ENCODE measurements at regions of chr2 and their contacts with region 1.

Region 1: GRCh38 chr2:233243348-233243747 is 8.1 kb upstream of the ATG16L1 start:
- DNase-seq: no peak
- ATAC-seq: no peak
- H3K4me3 Mint-ChIP-seq: no peak overlapping the region
- H3K27ac Mint-ChIP-seq: no peak overlapping the region
- H3K4me1 Mint-ChIP-seq: no peaks in the 10 kb centered on the region
- H3K27me3 Mint-ChIP-seq: no peaks in the 10 kb centered on the region
- CTCF ChIP-seq: no peak

Region 2: DNA sequence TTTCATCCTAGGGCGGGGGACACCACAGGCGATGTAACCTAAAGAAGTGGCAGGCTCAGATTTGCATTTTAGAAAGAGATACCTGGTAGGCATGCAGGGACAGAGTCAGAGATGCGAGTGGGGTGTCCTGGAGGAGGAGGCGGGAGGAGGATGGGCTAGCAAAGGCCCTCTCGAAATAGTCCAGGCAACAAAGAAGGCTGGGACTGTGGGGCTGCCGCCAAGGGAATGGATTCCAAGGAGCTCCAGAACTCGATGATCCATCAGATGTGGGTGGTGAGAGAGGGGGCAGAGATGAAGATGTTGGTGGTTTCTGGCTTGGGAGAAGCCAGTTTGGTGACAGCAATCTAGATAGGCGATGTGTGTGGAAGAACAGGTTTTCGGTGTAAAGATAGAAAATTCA is 195.7 kb before region 1 on chr2:
- CTCF ChIA-PET with region 1: no interaction called
- POLR2A ChIA-PET with region 1: interaction called, 11 read pairs
- DNase-seq: no peak
- ATAC-seq: no peak
- H3K4me3 Mint-ChIP-seq: no peak overlapping the region
- H3K27ac Mint-ChIP-seq: no peak overlapping the region
- H3K4me1 Mint-ChIP-seq: peaks cover 50% of the 10 kb centered on the region
- H3K27me3 Mint-ChIP-seq: no peaks in the 10 kb centered on the region; the same call in 1 of the 2 replicates
- CTCF ChIP-seq: no peak

Region 3: DNA sequence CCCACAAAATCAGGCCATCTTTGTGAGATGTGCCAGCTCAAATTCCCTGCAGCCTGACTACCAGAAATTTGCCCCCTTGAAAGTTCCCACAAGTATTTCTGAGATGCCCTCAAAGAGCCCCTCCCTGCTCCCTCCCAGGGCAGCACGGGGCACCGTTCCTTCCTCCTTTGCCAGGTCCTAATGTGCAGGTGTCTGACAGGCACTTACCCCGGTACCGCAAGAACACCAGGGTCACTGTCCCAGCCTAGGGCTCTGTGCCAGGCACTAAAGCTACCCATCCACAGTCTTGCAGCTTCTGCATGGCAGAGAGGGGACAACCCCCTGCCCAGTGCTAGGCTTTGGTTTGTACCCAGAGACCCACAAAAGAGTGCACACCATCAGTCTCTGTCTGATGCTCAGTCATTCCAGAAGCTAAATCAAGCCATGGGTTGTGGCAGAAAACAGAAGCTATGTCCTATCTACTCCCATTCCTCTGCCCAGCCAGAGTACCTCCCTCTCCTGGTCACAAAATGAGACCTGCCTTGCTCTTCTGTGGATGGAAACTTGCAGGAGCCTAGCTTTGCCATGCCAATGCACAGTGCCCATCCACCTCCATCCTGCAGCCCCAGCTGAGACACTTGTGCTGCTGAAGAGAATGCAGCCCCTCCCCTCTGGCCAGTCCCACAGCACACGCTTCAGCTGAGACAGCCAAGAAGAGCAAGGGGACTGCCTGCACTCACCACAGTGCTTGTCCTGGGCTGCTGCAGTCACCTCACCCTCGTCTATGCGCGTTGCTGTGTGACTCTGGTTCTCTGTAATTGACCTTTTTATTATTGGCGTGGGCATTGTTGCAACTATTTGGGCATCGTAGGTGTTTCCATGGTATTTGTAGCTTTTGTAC is 134.5 kb before region 1 on chr2:
- CTCF ChIA-PET with region 1: no interaction called
- POLR2A ChIA-PET with region 1: no interaction called
- DNase-seq: no peak
- ATAC-seq: 0 out of 2 replicates have a peak, but pooled peaks have one; percentile 39
- H3K4me3 Mint-ChIP-seq: no peak overlapping the region
- H3K27ac Mint-ChIP-seq: no peak overlapping the region
- H3K4me1 Mint-ChIP-seq: 0 out of 2 replicates have a peak, but pooled peaks cover 3% of the 10 kb centered on the region
- H3K27me3 Mint-ChIP-seq: no peaks in the 10 kb centered on the region
- CTCF ChIP-seq: no peak

Region 4: DNA sequence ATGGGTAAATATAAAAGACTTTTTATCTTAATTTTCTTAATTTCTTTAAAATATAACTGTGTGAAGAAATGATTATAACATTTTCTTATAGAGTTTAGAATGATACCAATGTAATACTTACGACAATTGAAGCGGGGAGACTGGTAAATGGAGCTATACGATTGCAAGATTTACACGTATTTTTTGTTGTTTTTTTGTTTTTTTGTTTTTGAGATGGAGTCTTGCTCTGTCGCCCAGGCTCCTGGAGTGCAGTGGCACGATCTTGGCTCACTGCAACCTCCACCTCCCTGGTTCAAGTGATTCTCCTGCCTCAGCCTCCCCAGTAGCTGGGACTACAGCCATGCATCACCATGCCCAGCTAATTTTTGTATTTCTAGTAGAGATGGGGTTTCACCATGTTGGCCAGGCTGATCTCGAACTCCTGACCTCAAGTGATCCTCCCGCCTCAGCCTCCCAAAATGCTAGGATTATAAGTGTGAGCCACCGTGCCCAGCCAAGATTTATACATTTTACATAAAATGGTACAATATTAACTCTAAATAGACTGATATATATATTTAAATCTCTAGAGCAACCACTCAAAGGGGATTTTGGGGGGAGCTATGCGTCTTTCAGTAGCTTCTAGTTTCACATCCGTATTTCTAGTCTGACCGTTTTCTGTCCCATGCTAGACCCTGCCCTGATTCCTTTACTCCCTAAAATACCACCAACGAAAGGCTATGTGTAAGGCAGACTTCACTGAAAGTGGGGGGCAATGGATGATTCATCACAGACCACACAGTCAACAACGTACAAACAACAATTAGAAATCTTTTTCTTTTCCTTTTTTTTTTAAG is 20.1 kb before region 1 on chr2:
- CTCF ChIA-PET with region 1: no interaction called
- POLR2A ChIA-PET with region 1: no interaction called
- DNase-seq: no peak
- ATAC-seq: no peak
- H3K4me3 Mint-ChIP-seq: no peak overlapping the region
- H3K27ac Mint-ChIP-seq: no peak overlapping the region
- H3K4me1 Mint-ChIP-seq: peaks cover 15% of the 10 kb centered on the region
- H3K27me3 Mint-ChIP-seq: no peaks in the 10 kb centered on the region; the same call in 1 of the 2 replicates
- CTCF ChIP-seq: no peak

Measured in WTC11 (cell line).